ENCODE measurements at regions of chr14 and their contacts with region 1.

Region 1: GRCh38 chr14:76352639-76353281 is 23.2 kb upstream of the ESRRB start:
- DNase-seq: peak; percentile 49 to 66
- ATAC-seq: peak; percentile 86 to 97
- H3K4me3 ChIP-seq: no peak overlapping the region
- H3K27ac ChIP-seq: peak overlapping the region in 1 of 2 experiments; percentile 25; a peak in 1 of 6 replicates
- H3K4me1 ChIP-seq: no peaks in the 10 kb centered on the region
- CTCF ChIP-seq: peak; percentile 84
- EP300 ChIP-seq: no peak
- POLR2A ChIP-seq: no peak
- RAD21 ChIP-seq: peak; percentile 67 to 82

Region 2: DNA sequence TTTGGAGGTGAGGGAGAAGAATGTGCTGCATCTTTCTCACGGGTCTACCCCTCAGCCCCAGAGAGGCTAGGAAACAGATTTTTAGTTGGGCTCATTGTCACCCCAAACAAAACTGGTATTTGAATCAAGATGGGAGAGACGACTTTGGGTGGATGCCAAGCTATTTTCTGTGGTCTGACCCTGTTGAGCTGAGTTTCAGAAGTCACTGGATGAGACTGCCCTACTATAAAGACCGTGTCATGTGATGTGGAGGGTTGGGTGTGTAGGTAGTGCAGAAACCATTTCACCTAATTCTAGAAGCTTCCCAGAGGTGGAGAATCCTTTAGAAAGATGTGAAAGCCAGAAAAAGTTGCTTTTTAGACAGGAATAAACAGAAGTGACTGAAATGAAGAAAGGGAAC is 307.0 kb before region 1 on chr14:
- CTCF ChIA-PET with region 1: interaction called, 142 read pairs
- POLR2A ChIA-PET with region 1: no interaction called
- DNase-seq: no peak
- ATAC-seq: no peak
- H3K4me3 ChIP-seq: no peak overlapping the region
- H3K27ac ChIP-seq: no peak overlapping the region
- H3K4me1 ChIP-seq: no peaks in the 10 kb centered on the region
- CTCF ChIP-seq: no peak
- EP300 ChIP-seq: no peak
- POLR2A ChIP-seq: no peak
- RAD21 ChIP-seq: no peak

Region 3: GRCh38 chr14:76311079-76311758 is 41.5 kb before region 1 on chr14:
- CTCF ChIA-PET with region 1: interaction called, 15 read pairs
- POLR2A ChIA-PET with region 1: no interaction called
- DNase-seq: no peak
- ATAC-seq: no peak
- H3K4me3 ChIP-seq: no peak overlapping the region
- H3K27ac ChIP-seq: no peak overlapping the region
- H3K4me1 ChIP-seq: no peaks in the 10 kb centered on the region
- CTCF ChIP-seq: no peak
- EP300 ChIP-seq: no peak
- POLR2A ChIP-seq: no peak
- RAD21 ChIP-seq: no peak

Region 4: DNA sequence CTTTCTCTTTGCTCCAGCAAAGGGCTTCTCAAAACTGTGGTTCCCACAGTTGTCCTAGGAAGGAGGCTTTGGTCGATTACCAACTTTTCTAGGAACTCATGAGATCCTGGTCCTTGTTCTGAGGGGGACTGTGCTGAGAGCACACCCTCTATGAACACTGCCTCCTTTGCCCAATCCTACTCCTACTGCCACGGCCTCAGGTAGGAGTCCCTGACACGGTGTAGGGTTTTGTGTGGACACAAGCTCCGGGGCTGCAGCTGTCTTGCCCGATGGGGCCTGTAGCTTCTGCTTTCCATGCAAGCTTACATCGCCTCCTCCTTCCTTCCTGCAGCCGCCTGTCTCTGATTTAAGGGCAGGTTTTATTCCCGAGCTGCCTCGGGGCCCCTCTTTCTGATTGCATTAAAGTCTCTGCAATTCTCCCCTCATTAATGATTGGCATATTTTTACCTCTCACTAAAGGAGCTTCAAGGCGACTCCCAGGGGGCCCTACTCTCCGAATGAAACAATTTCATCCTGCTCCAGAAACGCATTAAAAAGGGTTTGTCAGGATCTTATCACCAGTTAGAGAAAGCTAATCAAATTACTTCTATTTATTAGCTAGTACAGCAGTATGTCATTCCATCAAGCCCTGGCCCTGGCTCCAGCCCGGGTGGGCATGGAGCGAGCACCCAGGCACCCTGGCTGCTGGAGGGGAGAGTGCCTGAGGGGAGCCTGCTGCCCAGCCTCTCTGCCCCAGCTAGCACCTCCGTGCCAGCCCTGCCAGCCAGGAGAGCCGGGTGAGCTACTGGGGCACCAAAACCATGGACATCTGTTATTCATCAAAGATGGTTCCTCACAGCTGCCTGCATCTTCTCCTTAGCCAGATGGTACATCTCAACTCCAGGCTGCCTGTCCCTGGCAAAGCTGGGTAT is 14.9 kb before region 1 on chr14:
- CTCF ChIA-PET with region 1: interaction called, 38 read pairs
- POLR2A ChIA-PET with region 1: no interaction called
- DNase-seq: no peak
- ATAC-seq: peak in 1 of 2 experiments; percentile 63; a peak in 3 of 6 replicates
- H3K4me3 ChIP-seq: no peak overlapping the region
- H3K27ac ChIP-seq: no peak overlapping the region
- H3K4me1 ChIP-seq: no peaks in the 10 kb centered on the region
- CTCF ChIP-seq: no peak
- EP300 ChIP-seq: no peak
- POLR2A ChIP-seq: no peak
- RAD21 ChIP-seq: no peak

Region 5: GRCh38 chr14:76386915-76387782 is 34.4 kb after region 1 on chr14:
- CTCF ChIA-PET with region 1: interaction called, 56 read pairs
- POLR2A ChIA-PET with region 1: no interaction called
- DNase-seq: peak; percentile 61 to 86
- ATAC-seq: peak; percentile 92 to 99
- H3K4me3 ChIP-seq: no peak overlapping the region
- H3K27ac ChIP-seq: no peak overlapping the region
- H3K4me1 ChIP-seq: no peaks in the 10 kb centered on the region
- CTCF ChIP-seq: peak; percentile 76
- EP300 ChIP-seq: no peak
- POLR2A ChIP-seq: no peak
- RAD21 ChIP-seq: peak; percentile 87 to 95

Region 6: GRCh38 chr14:76396714-76397187 is 44.0 kb after region 1 on chr14:
- CTCF ChIA-PET with region 1: interaction called, 11 read pairs
- POLR2A ChIA-PET with region 1: no interaction called
- DNase-seq: no peak
- ATAC-seq: no peak
- H3K4me3 ChIP-seq: no peak overlapping the region
- H3K27ac ChIP-seq: no peak overlapping the region
- H3K4me1 ChIP-seq: no peaks in the 10 kb centered on the region
- CTCF ChIP-seq: no peak
- EP300 ChIP-seq: no peak
- POLR2A ChIP-seq: no peak
- RAD21 ChIP-seq: no peak